AG04449 (cell line): ENCODE measurements at regions of chr3 and their contacts with region 1.

Region 1: GRCh38 chr3:148955544-148956346 is 35.6 kb upstream of the GYG1 start:
- DNase-seq: peak; percentile 89
- H3K4me3 ChIP-seq: no peak overlapping the region
- CTCF ChIP-seq: peak; percentile 52

Region 2: DNA sequence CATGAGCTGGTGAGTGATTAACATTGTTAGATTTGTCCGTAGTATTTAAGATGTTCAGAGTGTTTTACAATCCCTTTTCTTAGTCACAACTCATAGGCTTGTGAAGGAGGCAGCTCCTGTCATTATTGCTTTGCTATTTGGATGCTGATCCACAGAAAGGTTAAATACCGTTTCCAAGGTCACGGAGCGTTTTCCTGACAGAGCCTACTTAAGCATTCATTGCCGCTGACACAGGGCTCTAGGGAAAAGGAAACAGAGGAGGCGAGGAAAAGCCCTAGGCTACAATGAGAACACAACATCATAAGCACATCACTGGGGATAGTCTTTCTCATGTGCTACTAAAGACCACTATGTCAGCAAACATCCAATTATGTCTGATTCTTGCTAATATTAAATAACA is 166.6 kb before region 1 on chr3:
- CTCF ChIA-PET with region 1: no interaction called
- POLR2A ChIA-PET with region 1: no interaction called
- DNase-seq: no peak
- H3K4me3 ChIP-seq: no peak overlapping the region
- CTCF ChIP-seq: no peak

Region 3: DNA sequence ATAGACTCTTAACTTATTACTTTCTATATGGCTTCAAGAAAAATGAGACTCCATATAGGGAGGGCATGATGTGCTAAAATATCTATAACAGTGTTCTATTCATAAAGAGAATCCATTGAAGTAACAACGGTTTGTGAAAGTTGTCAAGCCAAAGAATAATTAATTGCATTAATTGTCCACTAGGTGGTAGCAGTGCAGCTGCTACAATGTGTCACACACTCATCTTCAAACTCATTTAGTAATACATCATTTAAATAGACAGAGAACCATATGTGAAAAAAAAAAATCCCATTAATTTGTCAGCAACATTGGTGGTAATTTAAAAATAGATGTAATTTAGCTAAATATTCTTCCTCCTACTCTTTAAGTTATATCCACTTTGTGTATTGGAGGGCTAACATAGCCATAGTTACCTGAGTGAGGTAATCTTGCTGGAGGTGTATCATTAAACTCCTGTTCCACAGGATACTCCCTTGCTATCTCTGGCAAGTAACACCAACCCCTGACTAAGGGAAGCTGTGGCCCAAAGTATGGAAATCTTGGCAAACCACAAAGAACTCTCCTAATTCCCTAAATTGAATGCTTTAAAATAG is 94.4 kb before region 1 on chr3:
- CTCF ChIA-PET with region 1: interaction called, 614 read pairs
- POLR2A ChIA-PET with region 1: no interaction called
- DNase-seq: peak; percentile 9
- H3K4me3 ChIP-seq: no peak overlapping the region
- CTCF ChIP-seq: peak; percentile 21

Region 4: GRCh38 chr3:148971401-148972163 is 15.8 kb after region 1 on chr3:
- CTCF ChIA-PET with region 1: interaction called, 50 read pairs
- POLR2A ChIA-PET with region 1: no interaction called
- DNase-seq: peak; percentile 49
- H3K4me3 ChIP-seq: no peak overlapping the region
- CTCF ChIP-seq: no peak

Region 5: GRCh38 chr3:149077628-149078027 is 121.9 kb after region 1 on chr3:
- CTCF ChIA-PET with region 1: interaction called, 11 read pairs
- POLR2A ChIA-PET with region 1: no interaction called
- DNase-seq: peak; percentile 41
- H3K4me3 ChIP-seq: no peak overlapping the region; the same call in 1 of the 2 replicates
- CTCF ChIP-seq: no peak

Region 6: DNA sequence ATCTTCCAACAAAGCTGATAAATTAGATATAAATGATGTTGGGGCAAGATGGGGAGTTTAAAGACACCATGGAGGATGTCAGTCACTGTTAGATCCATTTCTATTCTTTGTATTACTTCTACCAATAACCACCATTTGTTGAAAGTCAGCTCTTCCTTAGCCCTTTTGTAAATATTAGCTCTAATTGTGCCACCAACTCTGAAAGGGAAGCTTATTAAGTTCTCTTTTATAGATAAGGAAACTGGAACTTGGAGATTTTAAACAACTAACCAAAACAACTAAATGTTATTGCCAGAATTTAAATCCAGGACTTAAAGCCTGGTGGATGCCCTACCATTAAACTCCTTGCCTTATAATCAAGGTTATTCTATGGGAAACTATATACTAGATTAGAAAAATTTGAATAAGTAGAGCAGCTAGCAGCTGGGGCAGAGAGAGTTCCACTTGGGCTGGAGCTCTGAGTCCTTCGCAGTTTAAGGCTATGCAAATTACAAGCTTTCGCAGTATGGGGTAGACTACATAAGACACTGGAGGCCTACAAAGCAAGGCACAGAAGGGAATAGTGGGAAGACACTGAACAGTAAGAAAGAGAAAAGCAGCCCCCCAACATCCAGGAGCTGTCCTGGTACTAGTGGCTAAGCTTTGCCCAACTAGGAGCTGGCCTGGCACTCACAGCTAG is 325.1 kb after region 1 on chr3:
- CTCF ChIA-PET with region 1: interaction called, 127 read pairs
- POLR2A ChIA-PET with region 1: no interaction called
- DNase-seq: no peak
- H3K4me3 ChIP-seq: no peak overlapping the region
- CTCF ChIP-seq: no peak

Region 7: DNA sequence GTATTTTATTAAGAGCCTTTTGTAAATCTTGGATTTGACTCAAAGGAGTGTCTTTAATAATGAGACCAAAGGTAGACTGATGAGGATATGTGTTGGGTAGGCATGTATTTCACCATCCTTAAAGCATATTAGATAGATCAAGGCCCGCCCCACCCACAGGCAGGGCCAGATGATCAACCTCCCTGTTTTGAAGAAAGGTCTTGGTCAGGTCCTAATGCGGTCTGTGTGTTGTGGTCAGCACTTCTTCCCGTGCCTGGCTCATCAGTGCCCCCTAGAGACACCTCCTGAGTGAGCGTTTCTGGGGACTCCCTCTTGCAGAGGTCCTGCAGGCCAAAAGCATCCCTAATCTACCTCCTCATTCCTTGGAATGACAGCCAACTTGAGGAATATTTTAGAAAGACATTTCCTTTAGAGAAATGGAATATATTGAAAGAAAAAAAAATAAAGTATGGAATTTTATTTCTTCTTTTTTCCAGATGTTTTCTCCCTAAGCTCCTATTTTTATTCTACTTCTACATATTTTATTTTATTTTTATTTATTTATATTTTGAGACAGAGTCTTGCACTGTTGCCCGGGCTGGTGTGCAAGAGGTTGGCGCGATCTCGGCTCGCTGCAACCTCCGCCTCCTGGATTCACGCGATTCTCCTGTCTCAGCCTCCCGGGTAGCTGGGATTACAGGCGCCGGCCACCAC is 524.7 kb after region 1 on chr3:
- CTCF ChIA-PET with region 1: interaction called, 14 read pairs
- POLR2A ChIA-PET with region 1: no interaction called
- DNase-seq: peak; percentile 37
- H3K4me3 ChIP-seq: no peak overlapping the region
- CTCF ChIP-seq: peak; percentile 94